Activated B cell treated with CpG ODN at 0.5 μM for 24 hours (primary cell): ENCODE measurements at regions of chr12 and their contacts with region 1.

Region 1: GRCh38 chr12:112198120-112198733 is 72.9 kb downstream of the TRAFD1 start:
- DNase-seq: peak; percentile 24
- ATAC-seq: peak; percentile 84
- H3K4me3 Mint-ChIP-seq: no peak overlapping the region
- H3K27ac Mint-ChIP-seq: no peak overlapping the region
- H3K4me1 Mint-ChIP-seq: no peaks in the 10 kb centered on the region
- H3K27me3 Mint-ChIP-seq: no peaks in the 10 kb centered on the region
- CTCF ChIP-seq: no peak

Region 2: GRCh38 chr12:111267144-111267543 is 931.1 kb before region 1 on chr12:
- CTCF ChIA-PET with region 1: no interaction called
- POLR2A ChIA-PET with region 1: interaction called, 10 read pairs
- intact Hi-C with region 1: no loop called
- DNase-seq: no peak
- ATAC-seq: no peak
- H3K4me3 Mint-ChIP-seq: no peak overlapping the region
- H3K27ac Mint-ChIP-seq: no peak overlapping the region
- H3K4me1 Mint-ChIP-seq: no peaks in the 10 kb centered on the region
- H3K27me3 Mint-ChIP-seq: peaks cover 12% of the 10 kb centered on the region
- CTCF ChIP-seq: no peak

Region 3: GRCh38 chr12:112125250-112125999 is 72.8 kb before region 1 on chr12 and contains the start of gene TRAFD1:
- CTCF ChIA-PET with region 1: no interaction called
- POLR2A ChIA-PET with region 1: no interaction called
- intact Hi-C with region 1: no loop called
- DNase-seq: peak; percentile 96
- ATAC-seq: peak; percentile 98
- H3K4me3 Mint-ChIP-seq: peak within 1 kb of the TSS; percentile 87
- H3K27ac Mint-ChIP-seq: peak within 1 kb of the TSS; percentile 78
- H3K4me1 Mint-ChIP-seq: peaks cover 45% of the 10 kb centered on the region
- H3K27me3 Mint-ChIP-seq: no peaks in the 10 kb centered on the region
- CTCF ChIP-seq: no peak
- total RNA-seq, gene TRAFD1: 47.8 and 51.0 TPM in 2 replicates

Region 4: GRCh38 chr12:112161711-112162110 is 36.5 kb before region 1 on chr12:
- CTCF ChIA-PET with region 1: no interaction called
- POLR2A ChIA-PET with region 1: no interaction called
- intact Hi-C with region 1: no loop called
- DNase-seq: no peak
- ATAC-seq: no peak
- H3K4me3 Mint-ChIP-seq: no peak overlapping the region
- H3K27ac Mint-ChIP-seq: peak overlapping the region; percentile 18
- H3K4me1 Mint-ChIP-seq: peaks cover 28% of the 10 kb centered on the region
- H3K27me3 Mint-ChIP-seq: no peaks in the 10 kb centered on the region
- CTCF ChIP-seq: no peak

Region 5: GRCh38 chr12:112183141-112184021 is 14.8 kb before region 1 on chr12:
- CTCF ChIA-PET with region 1: no interaction called
- POLR2A ChIA-PET with region 1: no interaction called
- intact Hi-C with region 1: no loop called
- DNase-seq: no peak
- ATAC-seq: no peak
- H3K4me3 Mint-ChIP-seq: no peak overlapping the region
- H3K27ac Mint-ChIP-seq: no peak overlapping the region
- H3K4me1 Mint-ChIP-seq: no peaks in the 10 kb centered on the region
- H3K27me3 Mint-ChIP-seq: no peaks in the 10 kb centered on the region
- CTCF ChIP-seq: no peak

Region 6: GRCh38 chr12:112261559-112261958 is 63.3 kb after region 1 on chr12:
- CTCF ChIA-PET with region 1: no interaction called
- POLR2A ChIA-PET with region 1: no interaction called
- intact Hi-C with region 1: no loop called
- DNase-seq: no peak
- ATAC-seq: no peak
- H3K4me3 Mint-ChIP-seq: no peak overlapping the region
- H3K27ac Mint-ChIP-seq: no peak overlapping the region
- H3K4me1 Mint-ChIP-seq: no peaks in the 10 kb centered on the region
- H3K27me3 Mint-ChIP-seq: no peaks in the 10 kb centered on the region
- CTCF ChIP-seq: no peak

Region 7: GRCh38 chr12:112409064-112409905 is 211.1 kb after region 1 on chr12 and contains the start of gene RPL6:
- CTCF ChIA-PET with region 1: interaction called, 13 read pairs
- POLR2A ChIA-PET with region 1: interaction called, 3 read pairs
- intact Hi-C with region 1: loop called (anchors 1 kb)
- DNase-seq: peak; percentile 70
- ATAC-seq: peak; percentile 91
- H3K4me3 Mint-ChIP-seq: peak within 1 kb of the TSS; percentile 100
- H3K27ac Mint-ChIP-seq: peak within 1 kb of the TSS; percentile 99
- H3K4me1 Mint-ChIP-seq: peaks cover 36% of the 10 kb centered on the region
- H3K27me3 Mint-ChIP-seq: no peaks in the 10 kb centered on the region
- CTCF ChIP-seq: no peak
- total RNA-seq, gene RPL6: 2,197 and 2,546 TPM in 2 replicates